GM13977 (cell line): ENCODE measurements at regions of chr14 and their contacts with region 1.

Region 1: DNA sequence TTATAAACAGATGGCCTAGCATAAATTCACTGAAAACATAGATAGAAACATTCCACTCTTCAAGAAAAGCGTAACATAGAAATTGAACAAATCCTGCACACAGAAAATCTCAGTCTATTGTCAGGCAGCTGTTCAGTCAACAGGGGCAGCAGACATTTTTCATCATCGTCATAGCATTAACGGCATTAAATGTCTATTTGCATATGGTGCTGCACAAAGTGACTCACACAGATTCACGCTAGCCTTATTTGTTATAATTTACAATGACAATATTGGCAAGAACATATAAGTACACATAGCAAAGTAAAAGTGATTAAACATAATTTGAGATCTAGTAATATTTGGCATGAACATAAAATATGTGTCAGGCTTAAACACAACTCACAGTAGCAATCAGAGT is 95.7 kb downstream of the CEP128 start:
- DNase-seq: no peak
- CTCF ChIP-seq: no peak

Region 2: GRCh38 chr14:80213599-80213998 is 632.3 kb before region 1 on chr14:
- in situ Hi-C with region 1: loop called (anchors 25 kb)
- DNase-seq: peak; percentile 20
- CTCF ChIP-seq: peak; percentile 57

Region 3: GRCh38 chr14:80468331-80469122 is 377.3 kb before region 1 on chr14:
- in situ Hi-C with region 1: no loop called
- DNase-seq: no peak
- CTCF ChIP-seq: no peak

Region 4: DNA sequence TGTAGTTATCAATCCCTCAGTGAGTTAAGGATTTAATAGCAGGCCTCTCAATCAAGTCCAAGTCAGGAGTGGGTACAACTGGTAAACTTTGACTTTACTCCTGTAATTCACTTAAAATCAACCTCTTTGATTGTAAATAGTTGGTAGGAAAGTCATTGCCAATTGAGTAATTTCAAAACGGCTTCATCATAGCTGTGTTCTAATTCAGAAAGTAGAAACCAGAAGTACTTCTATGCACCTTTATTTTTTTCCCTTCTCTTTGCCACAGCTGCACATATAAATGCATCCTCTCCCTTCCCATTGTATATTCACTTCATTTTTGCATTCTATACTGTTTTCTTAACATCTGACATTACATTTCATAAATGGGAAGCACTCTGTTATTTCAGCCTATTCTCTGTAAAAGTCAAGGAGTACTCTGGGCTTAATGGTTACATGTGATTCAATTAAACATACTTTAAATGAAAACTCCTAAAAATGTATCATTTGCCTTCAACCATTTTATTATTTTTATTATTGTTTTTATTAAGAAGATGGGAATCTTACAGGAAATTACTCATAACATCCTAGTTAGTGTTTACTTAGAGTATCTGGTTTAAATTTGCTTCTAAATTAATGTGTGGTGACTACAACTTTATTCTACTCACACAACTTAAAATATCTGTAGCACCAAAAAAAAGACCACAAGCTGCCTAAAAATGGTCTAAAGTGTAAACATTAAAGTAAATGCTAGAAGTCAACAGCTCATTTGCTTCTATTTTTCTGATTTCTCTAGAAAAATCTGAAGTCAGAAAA is 75.5 kb before region 1 on chr14:
- in situ Hi-C with region 1: no loop called
- DNase-seq: peak; percentile 20
- CTCF ChIP-seq: no peak